AG04450 (cell line): ENCODE measurements at regions of chr11 and their contacts with region 1.

Region 1: GRCh38 chr11:26286472-26287066 is 45.4 kb upstream of the ANO3 start:
- DNase-seq: no peak
- H3K4me3 ChIP-seq: no peak overlapping the region
- H3K27ac ChIP-seq: no peak overlapping the region
- H3K27me3 ChIP-seq: no peaks in the 10 kb centered on the region
- CTCF ChIP-seq: peak; percentile 56

Region 2: DNA sequence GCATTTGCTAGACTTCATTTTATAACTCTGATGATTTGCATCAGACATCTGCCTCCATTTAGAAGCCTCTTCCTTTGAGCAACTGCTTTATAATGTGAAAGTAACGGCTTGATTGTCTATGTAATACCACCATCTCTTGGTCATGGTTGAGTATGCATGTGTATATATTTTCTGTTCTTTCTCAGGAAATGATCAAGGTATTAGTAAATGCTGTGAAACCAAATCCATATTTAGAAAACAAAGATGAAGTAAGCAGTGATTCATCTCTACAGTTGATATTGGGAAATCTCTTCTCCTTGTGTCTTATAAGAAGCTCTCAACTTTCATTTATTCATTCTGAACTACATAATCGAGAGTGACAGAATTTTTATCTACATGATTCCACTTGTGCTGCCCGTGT is 59.3 kb before region 1 on chr11:
- CTCF ChIA-PET with region 1: interaction called, 19 read pairs
- POLR2A ChIA-PET with region 1: no interaction called
- DNase-seq: peak; percentile 71
- H3K4me3 ChIP-seq: peak overlapping the region; percentile 29
- H3K27ac ChIP-seq: peak overlapping the region; percentile 59
- H3K27me3 ChIP-seq: no peaks in the 10 kb centered on the region
- CTCF ChIP-seq: peak; percentile 58

Region 3: GRCh38 chr11:26244207-26244606 is 42.4 kb before region 1 on chr11:
- CTCF ChIA-PET with region 1: interaction called, 12 read pairs
- POLR2A ChIA-PET with region 1: no interaction called
- DNase-seq: no peak
- H3K4me3 ChIP-seq: no peak overlapping the region
- H3K27ac ChIP-seq: no peak overlapping the region
- H3K27me3 ChIP-seq: no peaks in the 10 kb centered on the region
- CTCF ChIP-seq: no peak

Region 4: DNA sequence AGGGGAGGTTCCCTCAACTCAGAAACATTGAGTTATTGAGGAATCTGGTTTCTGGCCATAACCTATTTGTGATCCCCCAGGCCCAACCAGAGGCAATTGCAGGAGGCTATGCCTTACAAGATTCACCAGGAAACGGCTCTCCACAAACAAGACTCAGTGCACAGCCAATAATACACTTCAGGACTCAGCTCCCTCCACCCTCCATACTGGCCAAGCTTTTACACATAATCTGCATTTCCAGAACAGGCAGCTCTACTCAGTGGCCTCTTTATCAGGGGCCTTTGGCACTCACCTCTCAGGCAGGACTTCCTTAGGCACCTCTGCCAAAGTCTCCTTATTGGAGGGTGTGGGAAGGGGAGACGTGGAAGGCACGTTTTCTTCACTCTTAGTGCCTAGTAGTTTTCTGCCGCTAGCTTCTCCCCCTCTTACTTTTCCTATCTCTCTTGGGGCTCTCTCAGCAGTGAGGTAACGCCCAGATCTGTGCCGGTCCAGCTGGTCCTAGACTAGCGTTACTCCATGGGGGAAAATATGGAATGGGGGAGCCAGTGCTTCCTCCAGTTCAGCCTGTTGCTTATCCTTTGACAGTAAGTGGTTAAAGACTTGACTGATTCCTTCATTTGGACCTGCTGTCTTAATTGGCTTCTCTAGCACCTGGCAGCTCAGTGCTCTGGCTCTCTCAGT is 17.4 kb before region 1 on chr11:
- CTCF ChIA-PET with region 1: interaction called, 16 read pairs
- POLR2A ChIA-PET with region 1: no interaction called
- DNase-seq: no peak
- H3K4me3 ChIP-seq: no peak overlapping the region
- H3K27ac ChIP-seq: no peak overlapping the region
- H3K27me3 ChIP-seq: no peaks in the 10 kb centered on the region
- CTCF ChIP-seq: no peak

Region 5: GRCh38 chr11:26297189-26297975 is 10.8 kb after region 1 on chr11:
- CTCF ChIA-PET with region 1: interaction called, 27 read pairs
- POLR2A ChIA-PET with region 1: no interaction called
- DNase-seq: peak; percentile 39
- H3K4me3 ChIP-seq: no peak overlapping the region
- H3K27ac ChIP-seq: no peak overlapping the region
- H3K27me3 ChIP-seq: no peaks in the 10 kb centered on the region
- CTCF ChIP-seq: peak; percentile 72

Region 6: DNA sequence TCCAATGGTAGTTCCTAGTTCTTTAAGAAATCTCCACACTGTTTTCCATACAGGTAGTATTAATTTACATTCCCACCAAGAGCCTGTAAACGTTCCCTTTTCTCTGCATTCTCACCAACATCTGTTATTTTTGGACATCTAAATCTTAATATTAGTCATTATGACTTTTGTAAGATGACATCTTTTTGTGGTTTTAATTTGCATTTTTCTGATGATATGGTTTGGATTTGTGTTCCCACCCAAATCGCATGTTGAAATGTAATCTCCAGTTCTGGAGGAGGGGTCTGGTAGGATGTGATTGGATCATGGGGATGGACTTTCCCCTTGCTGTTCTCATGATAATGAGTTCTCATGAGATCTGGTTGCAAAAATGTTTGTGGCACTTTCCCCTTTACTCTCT is 196.5 kb after region 1 on chr11:
- CTCF ChIA-PET with region 1: no interaction called
- POLR2A ChIA-PET with region 1: no interaction called
- DNase-seq: no peak
- H3K4me3 ChIP-seq: no peak overlapping the region
- H3K27ac ChIP-seq: no peak overlapping the region
- H3K27me3 ChIP-seq: no peaks in the 10 kb centered on the region
- CTCF ChIP-seq: no peak

Region 7: GRCh38 chr11:26551186-26551801 is 264.7 kb after region 1 on chr11:
- CTCF ChIA-PET with region 1: interaction called, 10 read pairs
- POLR2A ChIA-PET with region 1: no interaction called
- DNase-seq: no peak
- H3K4me3 ChIP-seq: no peak overlapping the region
- H3K27ac ChIP-seq: no peak overlapping the region
- H3K27me3 ChIP-seq: no peaks in the 10 kb centered on the region
- CTCF ChIP-seq: peak; percentile 65

Region 8: DNA sequence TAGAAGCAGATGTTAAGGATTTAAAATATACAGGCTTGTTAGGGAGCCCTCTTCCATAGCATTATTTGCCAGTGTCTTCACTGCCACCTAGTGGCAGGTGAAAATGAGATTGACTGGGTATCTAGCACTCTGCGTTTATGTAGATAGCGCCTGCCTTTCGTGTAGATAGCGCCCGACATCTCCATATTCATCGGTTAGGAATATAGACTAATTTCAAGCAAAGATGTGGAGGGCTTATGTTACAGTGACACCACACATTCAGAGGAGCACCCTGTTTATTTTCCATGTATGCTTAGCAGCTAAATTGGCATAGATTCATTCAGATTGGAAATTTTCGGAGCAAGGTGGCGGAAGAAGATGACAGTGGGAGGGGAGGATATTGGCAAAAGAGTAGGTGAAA is 363.3 kb after region 1 on chr11:
- CTCF ChIA-PET with region 1: interaction called, 12 read pairs
- POLR2A ChIA-PET with region 1: no interaction called
- DNase-seq: peak; percentile 32
- H3K4me3 ChIP-seq: no peak overlapping the region
- H3K27ac ChIP-seq: no peak overlapping the region
- H3K27me3 ChIP-seq: no peaks in the 10 kb centered on the region
- CTCF ChIP-seq: peak; percentile 84